GM13976 (cell line): ENCODE measurements at regions of chr4 and their contacts with region 1.

Region 1: GRCh38 chr4:110631584-110632505 is 9.0 kb upstream of the PITX2 start:
- DNase-seq: peak; percentile 84
- CTCF ChIP-seq: peak; percentile 59

Region 2: DNA sequence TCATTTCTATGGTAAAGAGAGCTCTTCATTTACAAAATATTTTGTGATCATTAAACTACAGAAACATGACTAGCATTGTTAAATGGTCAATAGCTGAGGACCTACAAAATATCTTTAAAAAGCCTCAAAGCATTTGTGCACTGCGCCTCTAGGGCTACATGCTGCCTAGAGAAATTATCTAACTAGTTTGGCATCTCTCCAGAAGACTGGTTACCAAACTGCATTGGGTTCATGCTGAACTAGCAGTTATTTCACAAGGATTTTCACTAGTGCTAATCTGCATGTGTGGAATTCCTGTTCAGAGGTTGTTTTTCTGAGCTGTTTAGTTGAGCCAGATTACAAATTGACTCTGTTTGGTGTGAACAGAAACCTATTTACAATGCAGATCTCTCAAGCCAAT is 49.5 kb after region 1 on chr4:
- in situ Hi-C with region 1: no loop called
- DNase-seq: no peak
- CTCF ChIP-seq: no peak

Region 3: GRCh38 chr4:110808351-110808878 is 176.6 kb after region 1 on chr4:
- in situ Hi-C with region 1: no loop called
- DNase-seq: no peak
- CTCF ChIP-seq: no peak

Region 4: GRCh38 chr4:110970642-110971041 is 338.8 kb after region 1 on chr4:
- in situ Hi-C with region 1: loop called (anchors 25 kb)
- DNase-seq: peak; percentile 1
- CTCF ChIP-seq: peak; percentile 50

Region 5: DNA sequence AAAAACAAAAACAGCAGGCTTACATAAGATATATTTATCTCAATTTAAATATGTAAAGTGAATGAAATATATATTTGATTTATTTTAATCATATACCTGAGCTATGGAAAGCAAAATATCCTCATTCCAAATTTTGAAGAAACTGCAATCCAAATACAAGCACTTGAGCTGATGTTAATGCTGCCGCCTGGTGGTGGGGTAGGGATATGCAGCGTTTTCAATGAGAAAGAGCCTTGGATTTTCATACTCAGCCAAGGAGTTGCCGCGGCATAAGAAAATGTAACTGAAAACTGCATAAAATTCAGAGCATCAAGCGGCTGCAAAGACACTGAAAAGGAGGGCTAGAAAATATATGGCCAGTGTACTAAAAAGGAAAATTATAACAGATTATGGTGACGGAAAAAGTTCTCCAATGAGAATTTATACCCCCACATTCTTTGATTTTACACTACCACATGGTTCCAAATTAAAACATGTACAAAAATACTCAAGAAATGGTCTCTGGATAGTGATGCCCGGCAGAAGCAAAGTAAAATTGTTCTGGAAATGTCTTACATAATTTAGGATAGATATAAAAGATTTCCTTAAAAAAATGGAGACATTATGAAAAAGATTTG is 651.3 kb after region 1 on chr4:
- in situ Hi-C with region 1: loop called (anchors 25 kb)
- DNase-seq: peak; percentile 46
- CTCF ChIP-seq: peak; percentile 82